ENCODE measurements at regions of chr10 and their contacts with region 1.

Region 1: GRCh38 chr10:84429926-84430520 is 101.6 kb downstream of the CCSER2 start:
- DNase-seq: peak; percentile 79
- H3K4me3 Mint-ChIP-seq: no peak overlapping the region
- H3K27ac Mint-ChIP-seq: no peak overlapping the region
- H3K4me1 Mint-ChIP-seq: peaks cover 14% of the 10 kb centered on the region
- H3K27me3 Mint-ChIP-seq: no peaks in the 10 kb centered on the region

Region 2: DNA sequence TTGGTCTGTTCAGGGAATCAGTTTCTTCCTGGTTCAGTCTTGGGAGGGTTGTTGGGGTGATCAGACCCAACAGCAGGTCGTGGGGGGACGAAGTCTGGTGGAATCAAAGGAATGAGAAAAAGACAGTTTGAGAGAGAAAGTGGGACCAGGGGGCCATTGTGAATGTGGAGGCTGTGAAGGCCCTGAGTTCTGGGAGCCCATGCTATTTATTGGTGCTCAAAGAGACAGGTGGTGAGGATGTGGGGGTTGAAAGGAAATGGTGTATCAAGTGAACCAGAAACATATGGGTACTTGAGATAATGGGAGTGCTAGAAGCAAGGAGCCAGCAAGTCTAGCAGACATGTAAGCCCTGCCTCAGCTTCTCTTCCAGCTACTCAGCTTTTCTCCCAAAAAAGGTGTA is 17.5 kb before region 1 on chr10:
- CTCF ChIA-PET with region 1: interaction called, 12 read pairs
- DNase-seq: no peak
- H3K4me3 Mint-ChIP-seq: no peak overlapping the region
- H3K27ac Mint-ChIP-seq: no peak overlapping the region
- H3K4me1 Mint-ChIP-seq: peaks cover 4% of the 10 kb centered on the region
- H3K27me3 Mint-ChIP-seq: no peaks in the 10 kb centered on the region

Measured in activated naive CD4-positive, alpha-beta T cell treated with anti-CD3 and anti-CD28 coated beads, Interleukin-2, amount 10 ng/mL, durations not matched to agents 7 days and 5 days (primary cell).